ENCODE measurements at regions of chr11 and their contacts with region 1.

Region 1: GRCh38 chr11:64810271-64810890 is at the start of gene MEN1:
- DNase-seq: peak; percentile 55 to 84 (median 75)
- H3K4me3 ChIP-seq: peak within 1 kb of the TSS; percentile 83
- H3K4me3 Mint-ChIP-seq: peak within 1 kb of the TSS; percentile 85 to 96 (median 94)
- H3K27ac ChIP-seq: peak within 1 kb of the TSS; percentile 78
- H3K27ac Mint-ChIP-seq: peak within 1 kb of the TSS; percentile 89 to 97 (median 94)
- H3K4me1 ChIP-seq: peaks cover 15% of the 10 kb centered on the region
- H3K4me1 Mint-ChIP-seq: peaks cover 23 to 33% (median 30%) of the 10 kb centered on the region in 3 donors
- H3K27me3 ChIP-seq: no peaks in the 10 kb centered on the region
- H3K27me3 Mint-ChIP-seq: peaks cover 0 to 3% of the 10 kb centered on the region in 2 donors
- total RNA-seq, gene MEN1: 45.8 to 47.7 TPM

Region 2: GRCh38 chr11:64583296-64584232 is 226.8 kb before region 1 on chr11:
- CTCF ChIA-PET with region 1: no interaction called
- POLR2A ChIA-PET with region 1: no interaction called
- DNase-seq: peak in 1 of 5 donors; percentile 8
- H3K4me3 ChIP-seq: no peak overlapping the region
- H3K4me3 Mint-ChIP-seq: no peak overlapping the region
- H3K27ac ChIP-seq: no peak overlapping the region
- H3K27ac Mint-ChIP-seq: peak overlapping the region in 1 of 8 donors; percentile 74
- H3K4me1 ChIP-seq: no peaks in the 10 kb centered on the region
- H3K4me1 Mint-ChIP-seq: no peaks in the 10 kb centered on the region
- H3K27me3 ChIP-seq: no peaks in the 10 kb centered on the region
- H3K27me3 Mint-ChIP-seq: peaks cover 8 to 32% of the 10 kb centered on the region in 2 donors

Region 3: GRCh38 chr11:64951529-64951928 is 141.1 kb after region 1 on chr11:
- CTCF ChIA-PET with region 1: no interaction called
- POLR2A ChIA-PET with region 1: no interaction called
- DNase-seq: no peak
- H3K4me3 ChIP-seq: no peak overlapping the region
- H3K4me3 Mint-ChIP-seq: no peak overlapping the region
- H3K27ac ChIP-seq: no peak overlapping the region
- H3K27ac Mint-ChIP-seq: no peak overlapping the region
- H3K4me1 ChIP-seq: no peaks in the 10 kb centered on the region
- H3K4me1 Mint-ChIP-seq: no peaks in the 10 kb centered on the region
- H3K27me3 ChIP-seq: peaks cover 4% of the 10 kb centered on the region
- H3K27me3 Mint-ChIP-seq: peaks cover 17 to 20% of the 10 kb centered on the region in 2 donors

Region 4: DNA sequence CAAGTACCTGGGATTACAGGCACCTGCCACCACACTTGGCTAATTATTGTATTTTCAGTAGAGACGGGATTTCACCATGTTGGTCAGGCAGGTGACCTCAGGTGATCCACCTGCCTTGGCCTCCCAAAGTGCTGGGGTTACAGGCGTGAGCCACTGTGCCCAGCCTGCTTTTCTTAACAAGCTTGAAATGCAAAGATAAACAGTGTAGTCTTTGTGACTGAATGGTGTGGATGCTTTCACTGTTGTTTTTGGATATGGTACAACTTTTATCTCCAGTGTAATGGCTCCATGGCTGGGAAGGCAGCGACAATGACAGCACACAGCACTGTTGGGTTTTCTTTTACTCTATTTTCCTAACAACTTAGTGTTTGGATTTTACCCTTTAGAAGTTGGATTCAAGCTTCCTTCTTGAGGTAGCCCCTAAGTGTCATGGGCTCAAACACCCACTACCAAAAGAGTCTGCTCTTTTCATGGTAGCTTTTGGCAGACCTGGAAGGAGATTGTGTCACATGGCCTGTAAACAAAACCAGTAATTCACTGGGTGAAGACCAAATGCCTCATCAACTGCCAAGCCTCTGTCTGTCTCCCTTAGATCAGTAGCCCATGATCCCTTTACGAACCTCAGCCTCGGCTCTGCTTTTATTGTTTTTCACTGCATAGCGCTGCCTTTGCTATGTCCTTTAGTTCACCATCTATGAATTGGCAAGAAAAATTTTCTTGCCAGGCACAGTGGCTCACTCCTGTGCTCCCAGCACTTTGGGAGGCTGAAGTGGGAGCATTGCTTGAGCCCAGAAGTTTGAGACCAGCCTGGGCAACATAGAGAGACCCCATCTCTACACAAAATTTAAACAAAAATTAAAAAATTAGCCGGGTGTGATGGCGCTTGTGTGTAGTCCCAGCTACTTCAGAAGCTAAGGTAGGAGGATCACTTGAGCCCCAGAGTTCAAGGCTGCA is 292.0 kb after region 1 on chr11:
- CTCF ChIA-PET with region 1: no interaction called
- POLR2A ChIA-PET with region 1: interaction called, 12 read pairs
- DNase-seq: no peak
- H3K4me3 ChIP-seq: no peak overlapping the region
- H3K4me3 Mint-ChIP-seq: peak overlapping the region in 1 of 7 donors; percentile 42
- H3K27ac ChIP-seq: no peak overlapping the region
- H3K27ac Mint-ChIP-seq: peak overlapping the region in 2 of 8 donors; percentile 9 to 22
- H3K4me1 ChIP-seq: peaks cover 11% of the 10 kb centered on the region
- H3K4me1 Mint-ChIP-seq: peaks cover 18 to 30% (median 19%) of the 10 kb centered on the region in 3 donors
- H3K27me3 ChIP-seq: no peaks in the 10 kb centered on the region
- H3K27me3 Mint-ChIP-seq: peaks cover 0 to 2% of the 10 kb centered on the region in 2 donors